MCF 10A (cell line): ENCODE measurements at regions of chr18 and their contacts with region 1.

Region 1: DNA sequence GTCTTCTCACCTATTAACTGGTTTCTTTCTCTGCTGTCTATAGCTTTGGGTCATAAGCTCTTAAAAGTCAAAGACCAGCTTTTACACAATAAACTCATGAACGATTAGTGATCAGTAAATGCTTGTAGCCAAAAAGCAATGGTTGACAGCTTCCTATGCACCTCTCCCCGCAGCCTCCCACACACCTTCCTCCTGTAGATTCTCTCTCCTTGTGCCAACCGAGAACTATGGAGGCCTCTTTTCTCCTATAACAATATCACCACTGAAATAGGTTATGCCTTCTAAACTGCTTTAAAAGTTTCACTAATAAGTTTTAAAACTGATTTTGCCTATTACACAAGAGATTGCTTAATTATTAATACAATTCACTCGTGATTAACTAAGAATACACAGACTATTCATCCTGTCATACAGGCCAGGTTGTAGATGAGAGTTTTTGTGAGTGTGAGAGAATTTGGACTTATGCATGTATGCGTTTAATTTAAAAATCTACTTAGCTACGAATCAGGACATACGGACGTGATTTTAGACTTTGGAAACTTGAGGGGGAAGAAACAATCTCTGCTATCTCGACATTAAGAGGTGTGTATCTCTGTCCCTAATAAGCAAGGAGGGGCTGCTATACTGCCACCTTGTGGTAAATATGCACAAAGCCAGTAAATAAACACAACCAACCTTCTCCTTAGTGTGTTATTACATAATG is 229.1 kb upstream of the RBBP8 start:
- DNase-seq: peak; percentile 76
- H3K4me3 Mint-ChIP-seq: no peak overlapping the region
- H3K27ac Mint-ChIP-seq: no peak overlapping the region
- H3K4me1 Mint-ChIP-seq: no peaks in the 10 kb centered on the region
- H3K27me3 Mint-ChIP-seq: no peaks in the 10 kb centered on the region
- CTCF ChIP-seq: peak; percentile 74

Region 2: GRCh38 chr18:21897811-21898210 is 806.2 kb before region 1 on chr18:
- CTCF ChIA-PET with region 1: interaction called, 5 read pairs
- POLR2A ChIA-PET with region 1: no interaction called
- intact Hi-C with region 1: loop called (anchors 1 kb)
- DNase-seq: peak; percentile 73
- H3K4me3 Mint-ChIP-seq: no peak overlapping the region
- H3K27ac Mint-ChIP-seq: no peak overlapping the region
- H3K4me1 Mint-ChIP-seq: no peaks in the 10 kb centered on the region
- H3K27me3 Mint-ChIP-seq: no peaks in the 10 kb centered on the region
- CTCF ChIP-seq: peak; percentile 78

Region 3: DNA sequence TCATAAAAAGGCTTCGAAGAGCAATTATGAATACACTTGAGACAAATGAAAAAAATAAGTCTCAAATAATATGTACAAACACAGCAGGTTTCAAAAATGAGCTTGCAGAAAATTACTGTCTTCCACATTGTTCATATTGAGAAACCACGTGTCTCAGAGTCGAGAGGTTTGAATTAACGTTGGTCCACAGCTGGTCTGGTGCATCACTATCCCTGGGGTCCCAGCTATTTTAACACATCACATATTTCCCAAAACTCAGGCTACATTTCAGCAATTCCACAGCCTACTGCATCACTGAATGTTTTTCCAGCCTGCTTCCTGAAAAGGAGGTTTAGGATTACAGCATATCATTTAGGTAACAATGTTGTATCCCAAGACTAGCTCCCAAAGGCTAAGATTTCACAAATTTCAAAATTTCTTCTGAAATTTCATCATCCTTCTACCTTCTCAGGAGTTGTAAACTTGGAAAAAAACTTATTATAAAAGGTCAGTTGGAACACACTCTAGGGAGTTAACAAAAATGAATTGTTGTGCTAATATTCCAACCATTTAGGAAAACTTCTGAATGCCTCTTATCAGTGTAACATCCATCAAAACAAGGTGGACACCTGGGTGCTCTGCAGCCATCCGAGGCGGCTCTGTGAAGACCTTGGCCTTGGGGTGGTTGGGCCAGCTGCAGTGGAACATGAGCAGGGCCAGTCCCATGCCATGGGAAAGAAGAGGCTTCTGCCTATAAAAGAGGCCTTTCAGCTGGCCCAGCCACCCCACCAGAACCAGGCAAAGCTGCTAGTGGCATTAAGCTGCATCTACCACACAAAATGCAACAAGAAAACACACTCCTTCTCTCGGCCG is 31.0 kb after region 1 on chr18:
- CTCF ChIA-PET with region 1: no interaction called
- POLR2A ChIA-PET with region 1: no interaction called
- intact Hi-C with region 1: no loop called
- DNase-seq: peak; percentile 26
- H3K4me3 Mint-ChIP-seq: no peak overlapping the region
- H3K27ac Mint-ChIP-seq: no peak overlapping the region
- H3K4me1 Mint-ChIP-seq: no peaks in the 10 kb centered on the region
- H3K27me3 Mint-ChIP-seq: no peaks in the 10 kb centered on the region
- CTCF ChIP-seq: no peak